AG04450 (cell line): ENCODE measurements at regions of chr19 and their contacts with region 1.

Region 1: GRCh38 chr19:47225746-47226425 is 5.1 kb downstream of the BBC3 start:
- DNase-seq: peak; percentile 59
- H3K4me3 ChIP-seq: peak overlapping the region; percentile 98
- H3K27ac ChIP-seq: peak overlapping the region; percentile 77
- H3K27me3 ChIP-seq: no peaks in the 10 kb centered on the region
- CTCF ChIP-seq: no peak; the same call in none of the 2 replicates

Region 2: GRCh38 chr19:47130591-47131227 is 95.2 kb before region 1 on chr19 and contains the start of gene SAE1:
- CTCF ChIA-PET with region 1: no interaction called
- POLR2A ChIA-PET with region 1: interaction called, 10 read pairs
- DNase-seq: peak; percentile 98
- H3K4me3 ChIP-seq: peak within 1 kb of the TSS; percentile 92
- H3K27ac ChIP-seq: peak within 1 kb of the TSS; percentile 81
- H3K27me3 ChIP-seq: no peaks in the 10 kb centered on the region
- CTCF ChIP-seq: peak; percentile 59
- polyA plus RNA-seq, gene SAE1: 142 and 165 TPM in 2 replicates

Region 3: DNA sequence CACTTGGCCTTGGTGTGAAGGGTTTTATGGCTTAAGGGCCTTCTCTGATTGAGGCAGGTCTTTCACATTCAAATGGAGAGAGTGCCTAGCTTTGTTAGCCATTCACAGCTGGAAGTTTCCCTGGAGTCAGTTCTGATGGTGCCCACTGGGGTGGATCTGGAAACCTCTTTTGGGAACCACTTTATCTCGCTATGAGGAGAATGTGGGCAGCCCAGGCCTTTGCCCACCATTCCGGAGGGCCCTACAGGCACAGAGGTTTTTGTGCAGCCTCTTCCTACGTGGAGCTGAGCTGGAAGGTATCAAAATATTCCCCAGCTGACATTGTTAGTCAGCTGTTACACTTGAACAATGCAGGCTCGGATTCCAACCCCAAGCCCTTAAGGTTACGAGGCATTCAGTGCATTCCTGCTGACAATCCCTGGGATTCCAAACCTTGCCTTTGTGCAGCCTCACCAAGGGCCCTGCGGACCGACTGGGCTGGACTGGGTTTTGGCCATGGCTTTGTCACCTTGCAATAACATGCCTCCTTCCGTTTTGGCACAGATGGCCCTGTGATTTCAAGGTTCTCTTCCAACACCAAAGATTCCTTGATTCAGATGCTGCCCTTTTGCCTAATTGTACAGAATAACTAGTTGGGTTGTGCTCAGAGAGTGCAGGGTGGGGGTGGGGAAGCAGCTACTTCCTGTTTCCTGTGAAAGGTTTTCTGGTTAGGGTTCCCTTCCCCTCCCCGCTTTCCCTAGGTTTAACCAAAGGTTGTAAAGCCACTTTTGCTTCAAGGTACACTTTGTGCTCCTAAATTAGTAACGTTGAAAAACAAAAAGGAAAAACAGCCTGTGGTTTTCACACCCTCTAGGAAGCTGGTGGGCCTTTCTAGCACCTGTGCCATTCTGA is 68.2 kb before region 1 on chr19:
- CTCF ChIA-PET with region 1: interaction called, 3 read pairs
- POLR2A ChIA-PET with region 1: interaction called, 14 read pairs
- DNase-seq: peak; percentile 50
- H3K4me3 ChIP-seq: no peak overlapping the region
- H3K27ac ChIP-seq: peak overlapping the region; percentile 69
- H3K27me3 ChIP-seq: no peaks in the 10 kb centered on the region
- CTCF ChIP-seq: 0 out of 2 replicates have a peak, but pooled peaks have one; percentile 5

Region 4: GRCh38 chr19:47200530-47200929 is 25.4 kb before region 1 on chr19:
- CTCF ChIA-PET with region 1: no interaction called
- POLR2A ChIA-PET with region 1: no interaction called
- DNase-seq: no peak
- H3K4me3 ChIP-seq: no peak overlapping the region
- H3K27ac ChIP-seq: no peak overlapping the region
- H3K27me3 ChIP-seq: no peaks in the 10 kb centered on the region
- CTCF ChIP-seq: no peak

Region 5: DNA sequence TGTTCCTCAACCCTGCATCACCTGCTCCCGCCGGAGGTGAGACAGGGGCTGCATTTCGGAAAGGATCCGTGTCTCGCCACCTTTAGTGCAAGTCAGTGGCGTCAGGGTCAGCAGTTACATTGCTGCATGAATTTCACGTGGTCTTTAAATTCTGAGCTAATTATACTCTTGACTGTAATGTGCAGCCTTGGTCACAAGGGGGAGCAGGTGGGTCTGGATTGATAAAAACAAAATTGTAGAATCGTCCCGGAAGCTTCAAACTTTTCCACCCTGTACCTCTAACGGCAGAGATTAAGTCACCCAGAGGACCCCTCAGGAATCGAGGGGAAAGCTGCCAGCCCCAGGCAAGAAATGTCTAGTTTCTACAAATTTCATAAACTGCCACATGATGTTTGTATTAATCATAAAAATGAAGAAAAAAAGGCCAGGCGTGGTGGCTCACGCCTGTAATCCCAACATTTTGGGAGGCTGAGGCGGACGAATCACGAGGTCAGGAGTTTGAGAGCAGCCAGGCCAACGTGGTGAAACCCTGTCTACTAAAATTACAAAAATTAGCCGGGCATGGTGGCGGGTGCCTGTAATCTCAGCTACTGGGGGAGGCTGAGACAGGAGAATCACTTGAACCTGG is 15.1 kb before region 1 on chr19:
- CTCF ChIA-PET with region 1: interaction called, 36 read pairs
- POLR2A ChIA-PET with region 1: interaction called, 78 read pairs
- DNase-seq: peak; percentile 59
- H3K4me3 ChIP-seq: no peak overlapping the region
- H3K27ac ChIP-seq: peak overlapping the region; percentile 95
- H3K27me3 ChIP-seq: no peaks in the 10 kb centered on the region
- CTCF ChIP-seq: peak; percentile 84

Region 6: DNA sequence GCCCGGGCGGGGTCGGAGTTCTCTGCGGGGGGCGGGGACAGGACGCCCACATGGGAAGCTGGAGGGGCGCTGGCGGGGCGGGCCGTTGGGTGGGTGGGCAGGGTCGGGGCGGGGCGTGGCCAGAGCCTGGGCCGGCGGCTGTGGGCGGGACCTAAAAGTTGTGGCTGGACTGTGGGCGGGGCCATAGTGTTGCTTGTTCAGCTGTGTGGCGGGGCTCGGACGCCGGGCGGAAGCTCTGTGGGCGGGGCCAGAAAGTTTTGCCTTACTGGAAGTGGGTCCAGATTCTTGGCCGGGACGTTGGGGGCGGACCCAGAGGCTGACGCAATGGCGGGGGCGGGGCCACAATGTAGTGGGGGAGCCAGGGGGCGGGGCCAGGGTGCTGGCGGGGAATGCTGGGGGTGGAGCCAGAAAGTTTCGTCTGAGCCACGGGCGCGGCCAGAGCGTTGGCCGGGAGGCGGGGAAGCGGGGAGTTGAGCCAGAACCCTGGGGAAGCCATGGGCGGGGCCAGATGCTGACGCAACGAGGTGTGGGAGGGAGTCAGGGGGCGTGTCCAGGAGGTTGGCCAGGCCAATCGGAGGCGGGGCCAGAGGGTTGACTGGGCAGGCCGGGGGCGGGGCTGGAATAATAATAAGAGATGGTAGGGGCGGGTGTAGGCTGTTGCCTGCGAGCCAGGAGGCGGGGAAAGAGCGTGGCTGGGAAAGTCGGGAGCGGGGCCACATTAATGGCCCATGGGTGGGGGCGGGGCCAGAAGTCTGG is 31.0 kb after region 1 on chr19:
- CTCF ChIA-PET with region 1: interaction called, 3 read pairs
- POLR2A ChIA-PET with region 1: interaction called, 44 read pairs
- DNase-seq: peak; percentile 99
- H3K4me3 ChIP-seq: peak overlapping the region; percentile 75
- H3K27ac ChIP-seq: peak overlapping the region; percentile 96
- H3K27me3 ChIP-seq: no peaks in the 10 kb centered on the region
- CTCF ChIP-seq: no peak

Region 7: DNA sequence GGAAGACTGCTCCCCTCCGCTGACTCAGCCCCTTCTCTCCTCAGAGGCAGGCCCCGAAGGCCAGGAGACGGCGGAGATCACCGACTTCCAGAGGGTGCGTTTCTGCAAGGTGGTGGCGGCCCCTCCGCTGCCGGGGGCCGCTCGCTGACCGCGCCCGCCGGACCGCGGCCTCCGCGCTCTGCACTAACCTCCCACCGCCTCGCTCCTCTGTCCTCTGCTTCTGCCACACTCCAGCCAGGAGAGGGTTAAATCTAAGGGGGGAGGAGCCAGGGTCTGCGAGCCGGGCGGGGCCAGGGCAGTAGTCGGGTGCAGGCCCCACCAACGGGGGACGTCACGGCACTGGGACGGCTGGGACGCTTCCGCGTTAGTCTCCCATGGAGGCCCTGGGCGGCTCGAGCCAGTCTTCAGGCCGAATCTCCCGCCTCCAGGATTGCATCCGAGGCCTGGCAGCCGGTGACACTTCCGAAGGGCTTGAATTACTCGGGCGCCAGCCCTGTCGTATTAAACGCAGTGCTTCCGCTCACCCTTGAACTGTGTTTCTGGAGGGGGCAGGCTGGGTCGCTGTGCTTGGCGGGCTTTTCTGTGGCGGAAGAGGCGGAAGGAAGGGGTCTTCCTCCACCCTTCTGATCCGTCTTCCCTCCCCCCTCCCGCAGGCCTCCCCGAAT is 47.6 kb after region 1 on chr19:
- CTCF ChIA-PET with region 1: no interaction called
- POLR2A ChIA-PET with region 1: interaction called, 22 read pairs
- DNase-seq: peak; percentile 77
- H3K4me3 ChIP-seq: peak overlapping the region; percentile 76
- H3K27ac ChIP-seq: peak overlapping the region; percentile 97
- H3K27me3 ChIP-seq: no peaks in the 10 kb centered on the region
- CTCF ChIP-seq: no peak

Region 8: GRCh38 chr19:47324502-47324901 is 98.6 kb after region 1 on chr19:
- CTCF ChIA-PET with region 1: no interaction called
- POLR2A ChIA-PET with region 1: no interaction called
- DNase-seq: no peak
- H3K4me3 ChIP-seq: no peak overlapping the region
- H3K27ac ChIP-seq: no peak overlapping the region
- H3K27me3 ChIP-seq: peaks cover 3% of the 10 kb centered on the region
- CTCF ChIP-seq: no peak